K562 (cell line): ENCODE measurements at regions of chr10 and their contacts with region 1.

Region 1: GRCh38 chr10:21807180-21807579 is 196.3 kb downstream of the DNAJC1 start:
- DNase-seq: peak; percentile 75 to 96 (median 84)
- ATAC-seq: peak; percentile 93
- H3K4me3 ChIP-seq: peak overlapping the region; percentile 36; the same call in 1 of the 2 replicates
- H3K27ac ChIP-seq: peak overlapping the region; percentile 89
- H3K4me1 ChIP-seq: peaks cover 0 to 45% of the 10 kb centered on the region in 2 experiments; a peak in 4 of 5 replicates
- H3K27me3 ChIP-seq: no peaks in the 10 kb centered on the region
- CTCF ChIP-seq: no peak
- EP300 ChIP-seq: peak; percentile 93
- POLR2A ChIP-seq: no peak; the same call in 1 of the 2 replicates
- RAD21 ChIP-seq: no peak; a peak in 1 of 4 replicates

Region 2: DNA sequence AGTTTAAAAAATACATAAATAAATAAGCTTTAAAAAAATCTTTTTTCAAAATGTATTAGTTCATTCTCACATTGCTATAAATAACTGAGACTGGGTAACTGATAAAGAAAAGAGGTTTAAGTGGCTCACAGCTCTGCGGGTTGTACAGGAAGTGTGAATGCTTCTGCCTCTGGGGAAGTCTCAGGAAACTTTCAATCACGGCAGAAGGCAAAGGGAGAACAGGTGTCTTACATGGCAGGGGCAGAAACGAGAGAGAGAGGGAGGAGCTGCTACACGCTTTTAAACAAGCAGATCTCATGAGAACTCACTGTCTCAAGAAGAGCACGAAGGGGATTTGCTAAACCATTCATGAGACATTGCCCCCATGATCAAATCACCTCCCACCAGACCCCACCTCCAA is 81.8 kb after region 1 on chr10:
- CTCF ChIA-PET with region 1: no interaction called
- POLR2A ChIA-PET with region 1: no interaction called
- in situ Hi-C with region 1: no loop called
- intact Hi-C with region 1: no loop called
- DNase-seq: no peak
- ATAC-seq: no peak
- H3K4me3 ChIP-seq: no peak overlapping the region
- H3K27ac ChIP-seq: no peak overlapping the region
- H3K4me1 ChIP-seq: peaks cover 0 to 3% of the 10 kb centered on the region in 2 experiments; a peak in 2 of 5 replicates
- H3K27me3 ChIP-seq: no peaks in the 10 kb centered on the region
- CTCF ChIP-seq: no peak
- EP300 ChIP-seq: no peak
- POLR2A ChIP-seq: no peak
- RAD21 ChIP-seq: no peak

Region 3: DNA sequence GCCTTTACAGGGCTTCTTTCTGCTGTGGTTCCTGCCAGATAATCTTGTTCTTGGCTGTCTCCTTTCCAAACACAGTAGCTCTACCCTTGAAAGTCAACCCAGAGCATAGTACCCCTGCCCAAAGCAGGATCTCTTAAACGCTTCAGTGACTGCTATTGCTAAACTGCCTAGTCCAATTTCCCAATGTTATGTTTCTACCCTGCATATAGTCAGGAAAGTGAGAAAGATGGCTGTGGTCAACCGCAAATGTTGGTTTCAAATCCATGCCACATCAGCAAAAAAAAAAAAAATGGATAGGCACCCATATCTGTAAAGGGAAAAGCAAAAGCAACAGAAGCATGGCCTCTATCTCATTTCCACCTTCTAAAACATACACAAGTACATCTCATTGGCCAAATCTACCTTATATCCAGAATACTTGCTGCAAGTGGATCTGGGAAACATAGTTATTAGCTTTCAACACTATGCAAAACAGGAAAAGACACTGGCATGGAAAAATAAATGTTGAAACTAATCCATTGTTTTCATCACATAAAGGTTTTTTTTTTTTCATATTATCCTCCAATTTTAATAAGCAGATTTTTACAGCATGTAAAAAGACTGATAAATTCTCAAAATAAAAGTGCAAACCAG is 136.6 kb after region 1 on chr10:
- CTCF ChIA-PET with region 1: no interaction called
- POLR2A ChIA-PET with region 1: no interaction called
- in situ Hi-C with region 1: no loop called
- intact Hi-C with region 1: loop called (anchors 2 kb)
- DNase-seq: no peak
- ATAC-seq: peak; percentile 59
- H3K4me3 ChIP-seq: no peak overlapping the region
- H3K27ac ChIP-seq: peak overlapping the region; percentile 44; the same call in 2 of the 3 replicates
- H3K4me1 ChIP-seq: peaks cover 0 to 22% of the 10 kb centered on the region in 2 experiments; a peak in 3 of 5 replicates
- H3K27me3 ChIP-seq: no peaks in the 10 kb centered on the region
- CTCF ChIP-seq: no peak
- EP300 ChIP-seq: no peak
- POLR2A ChIP-seq: no peak
- RAD21 ChIP-seq: no peak

Region 4: GRCh38 chr10:22325272-22326144 is 518.3 kb after region 1 on chr10:
- CTCF ChIA-PET with region 1: no interaction called
- POLR2A ChIA-PET with region 1: no interaction called
- in situ Hi-C with region 1: no loop called
- intact Hi-C with region 1: no loop called
- DNase-seq: peak; percentile 81 to 90 (median 85)
- ATAC-seq: peak; percentile 47
- H3K4me3 ChIP-seq: peak overlapping the region; percentile 50
- H3K27ac ChIP-seq: peak overlapping the region; percentile 68
- H3K4me1 ChIP-seq: peaks cover 6 to 21% of the 10 kb centered on the region in 2 experiments; a peak in 3 of 5 replicates
- H3K27me3 ChIP-seq: peaks cover 6 to 7% of the 10 kb centered on the region in 2 experiments; a peak in 3 of 5 replicates
- CTCF ChIP-seq: no peak
- EP300 ChIP-seq: no peak
- POLR2A ChIP-seq: no peak
- RAD21 ChIP-seq: peak in 1 of 2 experiments; percentile 14; a peak in 1 of 4 replicates